Kidney (tissue), 22 donors: ENCODE measurements at regions of chr11 and their contacts with region 1.

Region 1: DNA sequence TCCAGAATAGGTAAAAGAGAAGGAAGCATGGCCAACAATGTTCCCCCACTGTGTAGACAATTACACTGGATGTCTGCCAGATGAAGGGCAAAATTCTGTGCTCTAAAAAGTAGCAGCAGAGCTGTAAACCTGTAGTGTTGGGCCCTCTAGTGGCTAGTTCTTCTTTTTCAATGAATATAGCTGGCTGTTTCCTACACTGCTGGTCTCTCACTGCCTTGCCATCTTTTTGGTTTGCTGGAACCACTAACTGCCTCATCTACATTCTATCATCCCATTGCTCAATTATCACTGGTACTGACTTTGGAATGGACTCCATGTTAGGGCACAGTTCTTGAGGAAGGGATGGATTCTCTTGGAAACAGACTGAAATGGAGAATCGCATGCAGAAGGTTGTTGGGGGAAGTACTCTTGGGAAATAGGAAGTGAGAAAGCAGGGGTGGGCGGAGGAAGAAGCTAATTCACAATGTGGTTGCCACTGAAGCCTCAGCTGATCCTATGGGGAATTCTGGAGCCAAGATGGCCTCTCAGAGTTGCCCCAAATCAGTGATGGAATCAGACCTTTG is 17.9 kb downstream of the KCNE3 start:
- DNase-seq: peak in 3 of 5 donors; percentile 35 to 90 (median 84)
- H3K4me3 ChIP-seq: no peak overlapping the region
- H3K27ac ChIP-seq: no peak overlapping the region
- H3K4me1 ChIP-seq: no peaks in the 10 kb centered on the region
- H3K27me3 ChIP-seq: no peaks in the 10 kb centered on the region
- CTCF ChIP-seq: peak; percentile 82

Region 2: GRCh38 chr11:74037309-74037708 is 412.1 kb before region 1 on chr11:
- intact Hi-C with region 1: no loop called
- DNase-seq: peak in 1 of 5 donors; percentile 81
- H3K4me3 ChIP-seq: no peak overlapping the region
- H3K27ac ChIP-seq: no peak overlapping the region
- H3K4me1 ChIP-seq: no peaks in the 10 kb centered on the region
- H3K27me3 ChIP-seq: no peaks in the 10 kb centered on the region
- CTCF ChIP-seq: no peak

Region 3: DNA sequence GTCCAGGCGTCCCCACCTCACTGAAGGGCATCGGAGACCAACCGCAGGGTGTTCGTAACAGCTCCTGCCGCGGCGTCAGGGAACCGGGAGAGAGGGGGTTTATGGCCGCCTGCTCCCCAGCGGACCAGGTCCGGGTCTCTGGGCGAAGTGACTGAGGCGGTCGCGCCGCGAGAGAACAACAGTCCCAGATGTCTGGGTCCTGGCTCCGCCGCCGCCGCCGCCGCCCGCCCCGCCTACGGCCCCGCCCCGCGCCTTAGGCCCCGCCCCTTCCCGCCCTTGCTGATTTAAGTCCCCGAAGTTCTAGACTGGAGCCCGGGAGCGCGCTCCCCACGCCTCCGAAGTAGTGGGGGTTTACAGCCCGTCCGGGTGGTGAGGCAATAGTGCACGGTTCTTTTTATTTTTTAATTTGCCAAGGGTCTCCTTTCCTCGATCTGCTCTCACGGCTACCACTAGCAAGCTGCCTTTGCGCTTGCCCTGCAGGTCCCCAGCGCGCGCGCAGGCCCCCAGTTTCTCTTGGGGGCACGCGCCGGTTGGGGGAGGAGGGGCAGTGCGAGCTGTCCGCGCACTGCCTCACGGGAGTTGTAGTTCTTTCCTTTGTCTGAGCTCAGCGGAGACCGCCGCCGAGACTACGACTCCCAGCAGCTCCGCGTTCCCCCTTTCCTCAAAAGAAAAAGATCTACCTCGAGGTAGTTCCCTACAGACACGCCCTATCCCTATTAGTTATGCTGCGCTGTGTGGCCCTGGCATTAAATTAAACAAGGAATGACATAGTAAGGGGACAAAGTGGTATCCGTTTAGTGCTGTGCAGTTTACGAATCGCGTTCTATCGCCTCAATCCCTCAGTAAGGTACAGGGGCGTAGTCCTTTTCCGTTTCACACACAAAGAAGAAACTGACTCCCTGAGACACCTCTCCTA is 50.9 kb before region 1 on chr11 and contains the start of gene PGM2L1:
- intact Hi-C with region 1: loop called (anchors 10 kb)
- DNase-seq: peak; percentile 97 to 98 (median 97)
- H3K4me3 ChIP-seq: peak within 1 kb of the TSS; percentile 92 to 100 (median 99)
- H3K27ac ChIP-seq: peak within 1 kb of the TSS; percentile 95
- H3K4me1 ChIP-seq: no peaks in the 10 kb centered on the region
- H3K27me3 ChIP-seq: no peaks in the 10 kb centered on the region
- CTCF ChIP-seq: no peak
- total RNA-seq, gene PGM2L1: 11.5 TPM

Region 4: DNA sequence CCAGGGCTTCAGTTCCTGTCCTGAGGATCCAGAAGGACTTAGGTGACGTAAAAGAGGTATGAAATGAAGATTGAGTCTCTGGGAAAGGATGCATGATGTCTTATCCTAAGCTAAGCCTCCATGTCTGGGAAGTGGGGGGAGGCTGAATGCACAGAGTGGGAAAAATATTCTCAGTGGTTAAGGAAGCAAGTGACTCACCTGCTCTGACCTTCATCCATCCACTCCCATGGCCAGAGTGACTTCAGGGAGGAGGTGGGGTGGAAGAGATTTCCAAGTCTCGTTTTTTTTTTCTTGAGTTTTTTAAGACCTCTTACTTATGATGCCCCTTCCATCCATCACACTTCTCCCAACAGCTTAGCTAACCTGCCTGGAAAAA is 110.5 kb after region 1 on chr11:
- intact Hi-C with region 1: loop called (anchors 10 kb)
- DNase-seq: no peak
- H3K4me3 ChIP-seq: no peak overlapping the region
- H3K27ac ChIP-seq: peak overlapping the region in 1 of 2 donors; percentile 14
- H3K4me1 ChIP-seq: peaks cover 0 to 5% (median 2%) of the 10 kb centered on the region in 3 donors
- H3K27me3 ChIP-seq: no peaks in the 10 kb centered on the region
- CTCF ChIP-seq: no peak